ENCODE measurements at regions of chr9 and their contacts with region 1.

Region 1: DNA sequence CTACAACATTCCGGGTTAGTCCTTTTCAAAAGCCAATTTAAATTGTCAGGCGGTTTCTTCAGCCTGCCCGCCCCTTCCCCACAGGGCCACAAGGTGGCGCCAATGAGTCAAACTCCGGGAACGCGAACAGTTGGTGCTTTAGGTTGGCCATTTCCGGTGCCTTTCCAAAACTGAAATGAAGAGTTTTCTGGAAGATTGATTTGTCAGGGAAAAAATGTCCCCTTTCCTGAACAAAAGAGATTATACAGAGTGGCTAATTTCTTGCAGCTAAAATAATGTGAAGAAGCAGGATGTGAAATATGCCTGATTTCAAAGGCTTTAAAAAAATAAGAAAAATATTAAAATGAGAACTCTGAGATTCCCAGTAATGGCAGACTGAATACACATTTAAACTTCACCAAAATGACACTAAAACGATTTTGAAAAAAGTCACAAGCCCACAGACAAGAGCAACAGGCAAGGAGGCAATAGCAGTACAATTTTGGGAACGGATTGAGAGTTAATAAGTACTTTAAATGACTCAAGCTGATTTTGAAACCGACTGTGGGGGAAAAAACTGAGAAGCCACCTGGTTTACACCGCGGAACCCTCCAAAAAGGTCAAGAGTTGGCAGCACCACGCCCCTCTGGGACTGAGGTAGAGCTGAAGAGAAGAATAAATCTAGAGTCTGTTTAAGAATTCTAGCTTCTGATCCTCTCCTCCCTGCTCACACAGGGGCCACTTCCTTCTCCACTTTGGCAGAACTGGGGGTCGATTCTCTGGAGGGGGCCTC is 45.7 kb downstream of the SLC46A2 start:
- DNase-seq: peak; percentile 53 to 63 (median 56)
- H3K4me3 ChIP-seq: no peak overlapping the region
- H3K4me3 Mint-ChIP-seq: peak overlapping the region in 4 of 8 donors; percentile 18 to 54 (median 40)
- H3K27ac ChIP-seq: no peak overlapping the region
- H3K27ac Mint-ChIP-seq: peak overlapping the region in 2 of 7 donors; percentile 24 to 26
- H3K4me1 ChIP-seq: no peaks in the 10 kb centered on the region
- H3K4me1 Mint-ChIP-seq: peaks cover 10 to 38% (median 22%) of the 10 kb centered on the region in 4 donors
- H3K27me3 ChIP-seq: no peaks in the 10 kb centered on the region
- H3K27me3 Mint-ChIP-seq: no peaks in the 10 kb centered on the region

Region 2: DNA sequence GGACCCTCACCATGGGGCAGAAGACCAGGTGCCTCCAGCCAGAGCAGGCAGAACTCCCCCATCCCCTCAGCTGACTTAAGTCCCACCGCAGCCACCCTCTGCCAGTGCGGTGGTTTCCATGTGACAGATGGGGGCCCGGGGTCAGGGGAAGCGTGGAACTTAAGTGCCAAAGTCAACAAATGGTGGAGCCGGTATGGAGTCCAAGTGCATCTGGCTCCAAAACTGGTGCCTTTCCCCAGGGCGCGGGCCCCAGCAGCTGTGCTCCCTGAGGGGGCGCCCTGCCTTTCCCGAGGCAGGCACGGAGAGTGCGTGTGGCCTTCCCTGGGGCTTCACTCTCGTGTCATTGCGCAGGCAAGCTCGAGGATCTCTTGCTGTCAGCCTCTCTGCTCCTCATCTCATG is 11.9 kb after region 1 on chr9:
- CTCF ChIA-PET with region 1: interaction called, 15 read pairs
- POLR2A ChIA-PET with region 1: no interaction called
- intact Hi-C with region 1: no loop called
- DNase-seq: no peak
- H3K4me3 ChIP-seq: no peak overlapping the region
- H3K4me3 Mint-ChIP-seq: no peak overlapping the region
- H3K27ac ChIP-seq: no peak overlapping the region
- H3K27ac Mint-ChIP-seq: no peak overlapping the region
- H3K4me1 ChIP-seq: no peaks in the 10 kb centered on the region
- H3K4me1 Mint-ChIP-seq: peaks cover 2 to 9% (median 4%) of the 10 kb centered on the region in 4 donors
- H3K27me3 ChIP-seq: no peaks in the 10 kb centered on the region
- H3K27me3 Mint-ChIP-seq: no peaks in the 10 kb centered on the region

Region 3: DNA sequence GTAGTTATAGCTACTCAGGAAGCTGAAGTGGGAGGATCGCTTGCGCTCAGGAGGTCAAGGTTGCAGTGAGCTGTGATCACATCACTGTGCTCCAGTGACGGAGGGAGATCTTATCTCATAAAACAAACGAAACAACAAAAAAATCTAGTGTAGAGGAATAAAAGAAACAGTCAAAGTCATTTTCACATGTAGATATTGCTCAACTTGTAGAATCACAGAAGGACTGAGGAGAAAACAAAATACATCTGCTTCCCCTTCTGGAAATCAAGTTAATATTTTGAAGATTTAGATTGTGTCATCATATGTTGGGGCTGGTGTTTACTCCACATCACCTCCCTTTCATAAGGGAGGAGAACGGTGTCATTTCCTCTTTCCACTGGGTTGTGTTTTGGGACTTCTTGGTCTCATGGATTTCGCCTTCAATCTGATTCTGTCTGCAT is 53.9 kb after region 1 on chr9:
- CTCF ChIA-PET with region 1: interaction called, 12 read pairs
- POLR2A ChIA-PET with region 1: no interaction called
- intact Hi-C with region 1: loop called (anchors 1 kb)
- DNase-seq: no peak
- H3K4me3 ChIP-seq: no peak overlapping the region
- H3K4me3 Mint-ChIP-seq: no peak overlapping the region
- H3K27ac ChIP-seq: no peak overlapping the region
- H3K27ac Mint-ChIP-seq: no peak overlapping the region
- H3K4me1 ChIP-seq: no peaks in the 10 kb centered on the region
- H3K4me1 Mint-ChIP-seq: peaks cover 0 to 4% (median 0%) of the 10 kb centered on the region in 4 donors
- H3K27me3 ChIP-seq: no peaks in the 10 kb centered on the region
- H3K27me3 Mint-ChIP-seq: peaks cover 22 to 24% of the 10 kb centered on the region in 2 donors